ENCODE measurements at regions of chr1 and their contacts with region 1.

Region 1: DNA sequence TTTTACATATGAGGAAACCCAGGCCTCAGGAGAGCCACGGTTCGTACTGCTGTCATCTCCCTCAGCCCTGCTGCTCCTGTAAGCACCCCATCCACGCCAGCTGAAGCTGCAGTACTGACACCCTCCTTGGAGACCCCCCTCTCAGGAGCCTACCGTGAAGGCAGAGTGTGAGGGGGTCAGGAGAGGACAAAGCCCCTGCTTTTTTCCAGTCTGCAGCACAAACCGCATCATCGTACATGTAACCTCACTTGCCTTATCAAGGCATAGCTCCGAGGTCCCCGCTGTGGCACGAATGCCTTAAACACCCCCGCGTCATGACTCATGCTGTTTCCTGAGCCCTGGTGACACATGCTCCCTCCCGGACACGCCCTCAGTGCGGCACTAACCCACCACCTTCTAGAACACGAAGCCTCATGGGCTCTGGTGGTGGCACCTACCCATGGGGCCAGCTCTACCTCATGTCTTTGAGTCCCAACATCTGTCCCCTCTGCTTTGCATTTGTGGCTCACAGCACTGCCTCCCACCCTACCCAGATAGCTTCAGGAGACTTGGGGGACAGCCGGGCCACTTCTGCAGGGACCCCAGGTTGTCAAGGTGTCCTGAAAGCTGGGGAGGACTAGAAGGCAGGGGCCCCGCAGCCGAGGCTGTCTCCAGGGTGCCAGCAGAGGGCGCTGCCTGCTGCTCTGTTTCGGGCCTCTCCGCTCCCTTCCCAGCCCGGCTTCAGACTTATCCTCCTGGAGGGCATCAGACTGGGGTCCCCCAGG is 4.9 kb downstream of the SH3BGRL3 start:
- DNase-seq: peak; percentile 72
- H3K4me3 ChIP-seq: no peak overlapping the region
- H3K27me3 ChIP-seq: no peaks in the 10 kb centered on the region
- CTCF ChIP-seq: peak; percentile 73

Region 2: DNA sequence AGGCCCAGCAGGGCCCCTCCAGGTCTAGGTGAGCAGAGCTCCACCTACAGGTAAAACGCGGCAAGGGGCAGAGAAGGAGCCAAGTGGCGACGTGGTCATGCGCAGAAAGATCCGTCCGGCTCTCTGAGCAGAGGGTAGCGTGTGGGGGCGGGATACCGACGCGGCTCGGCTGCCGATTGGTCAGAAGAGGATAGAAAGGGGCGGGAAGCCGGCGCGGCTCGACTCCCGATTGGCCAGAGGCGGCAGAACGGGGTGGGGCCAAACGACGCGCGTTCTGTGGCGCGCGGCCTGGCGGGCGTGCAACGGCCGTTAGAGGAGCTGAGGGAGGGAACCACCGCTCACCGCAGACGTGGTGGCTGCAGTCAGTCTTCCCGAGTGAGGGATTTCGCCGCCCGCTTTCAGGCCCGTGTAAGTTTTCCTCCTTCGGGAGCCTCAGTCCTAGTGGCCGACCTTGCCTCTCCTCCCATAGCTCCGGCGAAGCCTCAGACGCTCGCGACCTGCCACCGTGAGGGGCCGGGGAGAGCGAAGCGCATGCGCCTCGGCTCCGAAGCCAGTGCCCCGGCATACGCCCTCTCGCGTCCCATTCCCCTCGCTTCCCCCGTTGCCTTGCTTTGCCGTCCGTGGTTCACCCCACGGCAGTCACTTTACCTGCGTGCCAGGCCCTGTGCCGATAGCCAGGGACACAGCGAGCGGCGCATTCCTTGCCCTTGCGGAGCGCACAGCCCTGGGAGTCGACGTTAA is 50.7 kb before region 1 on chr1 and contains the start of gene CEP85:
- CTCF ChIA-PET with region 1: interaction called, 30 read pairs
- POLR2A ChIA-PET with region 1: no interaction called
- DNase-seq: peak; percentile 70
- H3K4me3 ChIP-seq: peak within 1 kb of the TSS; percentile 64
- H3K27me3 ChIP-seq: no peaks in the 10 kb centered on the region
- CTCF ChIP-seq: peak; percentile 91
- polyA plus RNA-seq, gene CEP85: 9.4 and 10.8 TPM in 2 replicates

Region 3: GRCh38 chr1:26296340-26297056 is 11.7 kb after region 1 on chr1:
- CTCF ChIA-PET with region 1: interaction called, 27 read pairs
- POLR2A ChIA-PET with region 1: no interaction called
- DNase-seq: no peak
- H3K4me3 ChIP-seq: no peak overlapping the region
- H3K27me3 ChIP-seq: no peaks in the 10 kb centered on the region
- CTCF ChIP-seq: no peak

Region 4: GRCh38 chr1:26306290-26307229 is 21.8 kb after region 1 on chr1 and contains the start of gene UBXN11:
- CTCF ChIA-PET with region 1: interaction called, 10 read pairs
- POLR2A ChIA-PET with region 1: interaction called, 3 read pairs
- DNase-seq: peak; percentile 79
- H3K4me3 ChIP-seq: peak within 1 kb of the TSS; percentile 88
- H3K27me3 ChIP-seq: no peaks in the 10 kb centered on the region
- CTCF ChIP-seq: no peak
- polyA plus RNA-seq, gene UBXN11: 8.5 and 12.9 TPM in 2 replicates

Region 5: DNA sequence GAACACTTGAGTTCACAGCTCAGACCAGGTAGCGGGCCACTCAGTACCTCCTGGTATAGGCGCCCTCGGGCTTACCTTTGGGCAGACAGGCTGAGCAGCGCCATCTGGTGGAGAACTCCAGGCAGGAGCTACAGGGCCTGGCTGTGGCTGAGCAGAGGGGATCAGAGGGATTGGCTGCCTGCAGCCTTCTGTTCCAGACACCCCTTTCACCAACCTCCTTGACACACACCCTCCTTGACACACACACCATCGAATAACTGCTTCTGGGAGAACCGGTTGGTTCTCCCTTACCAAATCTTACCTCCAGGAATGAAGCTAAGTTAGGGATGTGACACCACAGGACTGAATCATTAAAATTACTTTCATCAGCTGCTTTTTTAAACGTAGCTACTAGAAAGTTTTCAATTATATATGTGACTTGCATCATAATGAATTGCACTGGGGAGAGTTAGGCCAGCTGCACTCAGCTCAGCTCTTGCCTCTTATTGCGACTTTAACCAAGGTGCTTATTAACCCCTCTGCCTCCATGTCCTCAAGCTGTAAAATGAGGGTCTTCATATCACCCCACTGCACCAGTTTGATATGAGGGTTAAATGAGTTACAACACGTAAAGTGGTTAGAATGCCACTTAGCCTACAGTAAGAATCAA is 132.5 kb after region 1 on chr1:
- CTCF ChIA-PET with region 1: interaction called, 12 read pairs
- POLR2A ChIA-PET with region 1: no interaction called
- DNase-seq: no peak
- H3K4me3 ChIP-seq: no peak overlapping the region
- H3K27me3 ChIP-seq: peaks cover 17% of the 10 kb centered on the region
- CTCF ChIP-seq: peak; percentile 95